ENCODE measurements at regions of chr2 and their contacts with region 1.

Region 1: DNA sequence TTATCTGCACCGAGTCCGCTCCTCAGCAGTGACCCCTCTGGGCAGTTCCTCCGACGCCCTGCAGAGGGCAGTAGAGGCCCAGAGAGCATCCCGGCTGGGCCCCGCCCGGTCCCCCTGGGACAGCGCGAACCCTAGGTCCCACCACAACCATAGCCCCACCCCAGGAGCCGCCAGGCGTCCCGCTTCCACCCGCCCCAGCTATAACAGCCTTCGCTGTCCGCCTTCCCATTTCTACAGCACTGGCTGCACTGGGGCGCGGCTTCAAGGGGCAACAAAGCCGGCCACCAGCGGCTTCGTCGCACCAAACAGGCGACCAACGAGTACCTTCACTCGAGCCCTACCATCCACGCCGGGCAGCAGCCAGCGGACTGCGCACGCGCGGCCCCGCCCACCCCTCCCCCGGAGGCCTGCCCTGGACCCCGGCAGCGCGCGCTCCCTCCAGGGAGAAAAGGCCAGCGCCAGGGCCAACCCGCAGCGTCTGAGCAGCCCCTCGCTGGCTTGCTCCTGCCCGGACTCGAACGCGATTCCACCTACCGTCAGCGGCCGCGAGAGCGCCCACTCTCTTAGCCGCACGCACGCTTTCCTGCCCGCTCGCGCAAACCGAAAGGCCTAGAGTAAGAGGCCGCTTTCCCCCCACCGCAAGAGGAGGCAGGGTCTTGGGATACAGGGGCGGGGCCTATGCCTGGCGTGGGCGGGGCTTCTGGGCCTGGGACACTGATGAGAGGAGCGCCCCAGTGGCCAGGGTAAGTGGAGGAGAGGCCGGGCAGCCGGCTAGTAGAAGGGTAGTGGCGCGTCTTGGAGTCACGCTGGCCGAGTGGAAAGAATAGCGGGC is at the start of gene NHEJ1:
- DNase-seq: peak; percentile 65
- ATAC-seq: peak; percentile 97
- H3K4me3 ChIP-seq: peak within 1 kb of the TSS; percentile 85
- H3K27ac ChIP-seq: peak within 1 kb of the TSS; percentile 78
- H3K4me1 ChIP-seq: peaks cover 4% of the 10 kb centered on the region; the same call in 1 of the 2 replicates
- H3K27me3 ChIP-seq: no peaks in the 10 kb centered on the region
- CTCF ChIP-seq: peak; percentile 89 to 99 (median 97); a peak in 5 of 6 replicates
- EP300 ChIP-seq: no peak
- POLR2A ChIP-seq: peak; percentile 87
- RAD21 ChIP-seq: peak; percentile 82
- polyA plus RNA-seq, gene NHEJ1: 17.8 to 20.2 TPM

Region 2: GRCh38 chr2:218536804-218537494 is 623.5 kb before region 1 on chr2:
- CTCF ChIA-PET with region 1: no interaction called
- POLR2A ChIA-PET with region 1: no interaction called
- RAD21 ChIA-PET with region 1: no interaction called
- SMC1A ChIA-PET with region 1: no interaction called
- in situ Hi-C with region 1: no loop called
- intact Hi-C with region 1: no loop called
- DNase-seq: no peak
- ATAC-seq: no peak
- H3K4me3 ChIP-seq: no peak overlapping the region
- H3K27ac ChIP-seq: no peak overlapping the region
- H3K4me1 ChIP-seq: no peaks in the 10 kb centered on the region
- H3K27me3 ChIP-seq: no peaks in the 10 kb centered on the region
- CTCF ChIP-seq: no peak
- EP300 ChIP-seq: no peak
- POLR2A ChIP-seq: no peak
- RAD21 ChIP-seq: no peak

Region 3: GRCh38 chr2:219057709-219058540 is 102.5 kb before region 1 on chr2:
- CTCF ChIA-PET with region 1: interaction called, 51 read pairs
- POLR2A ChIA-PET with region 1: no interaction called
- RAD21 ChIA-PET with region 1: interaction called, 21 read pairs
- SMC1A ChIA-PET with region 1: interaction called, 13 read pairs
- in situ Hi-C with region 1: no loop called
- intact Hi-C with region 1: loop called (anchors 1 kb)
- DNase-seq: no peak
- ATAC-seq: peak; percentile 99
- H3K4me3 ChIP-seq: no peak overlapping the region
- H3K27ac ChIP-seq: no peak overlapping the region
- H3K4me1 ChIP-seq: no peaks in the 10 kb centered on the region
- H3K27me3 ChIP-seq: peaks cover 23 to 26% of the 10 kb centered on the region in 2 experiments
- CTCF ChIP-seq: peak; percentile 80 to 93 (median 82)
- EP300 ChIP-seq: no peak
- POLR2A ChIP-seq: no peak
- RAD21 ChIP-seq: peak; percentile 84

Region 4: DNA sequence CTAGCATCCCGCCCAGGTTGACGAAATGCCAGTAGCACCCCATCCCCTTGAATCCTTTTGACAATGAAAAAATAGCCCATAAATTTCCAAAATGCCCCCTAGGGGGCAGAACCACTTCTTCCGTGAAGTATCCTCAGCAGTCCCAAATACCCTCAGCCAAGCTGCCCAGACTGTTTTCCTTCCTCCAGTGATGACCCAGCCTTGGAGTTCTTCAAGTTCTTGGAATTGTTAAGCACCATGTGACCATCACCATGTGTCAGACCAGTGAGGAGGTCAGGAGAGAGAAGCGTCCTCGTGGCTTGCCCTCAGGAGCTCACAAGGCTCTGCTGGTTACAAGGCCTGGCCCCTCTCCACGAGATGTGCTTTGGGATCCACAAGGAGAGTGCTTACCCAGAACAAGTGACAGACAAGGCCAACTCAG is 10.8 kb after region 1 on chr2:
- CTCF ChIA-PET with region 1: interaction called, 13 read pairs
- POLR2A ChIA-PET with region 1: no interaction called
- RAD21 ChIA-PET with region 1: interaction called, 6 read pairs
- SMC1A ChIA-PET with region 1: interaction called, 13 read pairs
- in situ Hi-C with region 1: no loop called
- intact Hi-C with region 1: loop called (anchors 1 kb)
- DNase-seq: no peak
- ATAC-seq: peak; percentile 61
- H3K4me3 ChIP-seq: no peak overlapping the region
- H3K27ac ChIP-seq: no peak overlapping the region
- H3K4me1 ChIP-seq: no peaks in the 10 kb centered on the region; the same call in 1 of the 2 replicates
- H3K27me3 ChIP-seq: no peaks in the 10 kb centered on the region
- CTCF ChIP-seq: peak; percentile 65 to 77 (median 65)
- EP300 ChIP-seq: no peak
- POLR2A ChIP-seq: 0 out of 2 replicates have a peak, but pooled peaks have one; percentile 33
- RAD21 ChIP-seq: peak; percentile 52

Region 5: GRCh38 chr2:219206442-219207253 is 46.2 kb after region 1 on chr2 and contains the start of gene ZFAND2B:
- CTCF ChIA-PET with region 1: interaction called, 7 read pairs
- POLR2A ChIA-PET with region 1: interaction called, 3 read pairs
- RAD21 ChIA-PET with region 1: interaction called, 10 read pairs
- SMC1A ChIA-PET with region 1: interaction called, 6 read pairs
- in situ Hi-C with region 1: no loop called
- intact Hi-C with region 1: loop called (anchors 1 kb)
- DNase-seq: peak; percentile 52
- ATAC-seq: peak; percentile 99
- H3K4me3 ChIP-seq: peak within 1 kb of the TSS; percentile 50
- H3K27ac ChIP-seq: peak within 1 kb of the TSS; percentile 72
- H3K4me1 ChIP-seq: peaks cover 8% of the 10 kb centered on the region
- H3K27me3 ChIP-seq: no peaks in the 10 kb centered on the region
- CTCF ChIP-seq: peak in 2 of 3 experiments; percentile 9 to 14; a peak in 1 of 6 replicates
- EP300 ChIP-seq: no peak
- POLR2A ChIP-seq: peak; percentile 99
- RAD21 ChIP-seq: no peak
- polyA plus RNA-seq, gene ZFAND2B: 5.4 to 10.7 TPM

Region 6: DNA sequence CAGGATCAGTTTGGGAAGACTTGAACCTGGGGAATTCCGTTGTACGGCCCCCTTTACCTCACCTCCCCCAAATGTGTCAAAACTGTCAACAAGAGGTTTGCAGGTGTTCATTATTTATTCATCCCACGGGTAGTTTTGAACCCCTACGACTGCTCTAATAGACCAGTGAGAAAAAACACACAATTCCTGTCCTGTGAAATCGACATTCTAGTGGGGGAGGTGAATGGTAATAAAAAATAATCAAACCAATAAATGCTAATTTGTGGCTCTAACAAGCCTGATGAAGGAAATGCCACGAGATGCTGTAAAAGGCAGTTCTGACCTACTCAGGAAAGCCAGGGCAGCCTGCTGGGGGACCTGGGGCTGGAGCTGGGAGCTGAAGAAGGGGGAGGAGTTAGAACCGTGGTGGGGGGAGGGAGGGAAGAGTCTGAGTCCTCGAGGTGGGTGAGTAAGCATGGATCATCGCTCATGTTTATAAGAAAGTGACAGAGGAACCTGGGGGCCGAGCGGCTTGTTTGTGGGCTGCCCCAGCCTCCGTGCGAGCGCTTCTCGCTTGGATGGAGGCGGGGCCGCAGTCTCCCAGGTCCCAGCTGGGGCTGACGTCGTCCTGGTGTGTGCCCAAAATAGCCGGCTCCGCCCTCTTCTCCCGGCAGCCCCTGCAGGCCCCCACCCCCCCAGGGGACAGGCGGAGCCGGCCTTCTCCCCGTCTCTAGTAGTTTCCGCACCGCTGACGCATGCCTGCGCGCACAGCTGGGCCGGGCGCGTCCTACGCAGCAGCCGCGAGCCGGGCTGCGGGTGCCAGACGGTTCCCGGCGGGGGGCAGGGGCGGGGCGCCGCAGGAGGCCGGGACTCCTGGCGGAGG is 118.5 kb after region 1 on chr2 and contains the start of gene DNAJB2:
- CTCF ChIA-PET with region 1: interaction called, 6 read pairs
- POLR2A ChIA-PET with region 1: no interaction called
- RAD21 ChIA-PET with region 1: interaction called, 11 read pairs
- SMC1A ChIA-PET with region 1: interaction called, 6 read pairs
- in situ Hi-C with region 1: no loop called
- intact Hi-C with region 1: loop called (anchors 1 kb)
- DNase-seq: peak; percentile 89
- ATAC-seq: peak; percentile 91
- H3K4me3 ChIP-seq: peak within 1 kb of the TSS; percentile 71
- H3K27ac ChIP-seq: peak within 1 kb of the TSS; percentile 90
- H3K4me1 ChIP-seq: peaks cover 26% of the 10 kb centered on the region
- H3K27me3 ChIP-seq: no peaks in the 10 kb centered on the region
- CTCF ChIP-seq: no peak
- EP300 ChIP-seq: peak; percentile 72 to 83
- POLR2A ChIP-seq: peak; percentile 91
- RAD21 ChIP-seq: no peak
- polyA plus RNA-seq, gene DNAJB2: 0.26 to 0.90 TPM

Region 7: GRCh38 chr2:219388127-219388844 is 227.9 kb after region 1 on chr2:
- CTCF ChIA-PET with region 1: no interaction called
- POLR2A ChIA-PET with region 1: no interaction called
- RAD21 ChIA-PET with region 1: interaction called, 4 read pairs
- SMC1A ChIA-PET with region 1: no interaction called
- in situ Hi-C with region 1: no loop called
- intact Hi-C with region 1: loop called (anchors 5 kb)
- DNase-seq: peak; percentile 83
- ATAC-seq: peak; percentile 86
- H3K4me3 ChIP-seq: peak overlapping the region; percentile 8; the same call in 1 of the 2 replicates
- H3K27ac ChIP-seq: no peak overlapping the region
- H3K4me1 ChIP-seq: peaks cover 5% of the 10 kb centered on the region
- H3K27me3 ChIP-seq: no peaks in the 10 kb centered on the region
- CTCF ChIP-seq: peak; percentile 48 to 67 (median 63); a peak in 5 of 6 replicates
- EP300 ChIP-seq: no peak
- POLR2A ChIP-seq: no peak
- RAD21 ChIP-seq: no peak

Region 8: DNA sequence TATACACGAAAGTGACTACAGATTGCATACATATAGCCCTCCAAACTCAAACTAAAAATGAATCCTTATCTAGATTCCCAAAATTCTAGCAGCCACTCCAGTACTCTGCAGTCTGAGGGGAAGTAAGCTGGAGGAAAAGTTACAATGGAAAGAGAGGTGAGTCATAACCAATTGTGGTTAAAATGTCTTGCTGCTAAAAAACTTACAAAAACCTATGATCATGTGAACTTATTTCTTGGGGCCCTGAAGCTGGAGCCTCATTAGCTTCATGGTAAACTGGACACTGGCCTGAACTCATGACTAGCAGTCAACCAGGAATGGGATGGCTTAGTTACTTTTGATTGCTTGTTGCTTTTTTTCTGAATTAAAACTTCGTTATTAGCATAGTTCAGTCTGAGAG is 642.9 kb after region 1 on chr2:
- CTCF ChIA-PET with region 1: no interaction called
- POLR2A ChIA-PET with region 1: no interaction called
- RAD21 ChIA-PET with region 1: no interaction called
- SMC1A ChIA-PET with region 1: no interaction called
- in situ Hi-C with region 1: no loop called
- intact Hi-C with region 1: no loop called
- DNase-seq: no peak
- ATAC-seq: no peak
- H3K4me3 ChIP-seq: no peak overlapping the region
- H3K27ac ChIP-seq: no peak overlapping the region
- H3K4me1 ChIP-seq: no peaks in the 10 kb centered on the region
- H3K27me3 ChIP-seq: no peaks in the 10 kb centered on the region
- CTCF ChIP-seq: no peak
- EP300 ChIP-seq: no peak
- POLR2A ChIP-seq: no peak
- RAD21 ChIP-seq: no peak

Measured in GM12878 (cell line).